ENCODE measurements at regions of chr21 and their contacts with region 1.

Region 1: GRCh38 chr21:23507501-23507900 is 2099.8 kb downstream of the MRPL39 start:
- DNase-seq: no peak
- CTCF ChIP-seq: no peak

Region 2: DNA sequence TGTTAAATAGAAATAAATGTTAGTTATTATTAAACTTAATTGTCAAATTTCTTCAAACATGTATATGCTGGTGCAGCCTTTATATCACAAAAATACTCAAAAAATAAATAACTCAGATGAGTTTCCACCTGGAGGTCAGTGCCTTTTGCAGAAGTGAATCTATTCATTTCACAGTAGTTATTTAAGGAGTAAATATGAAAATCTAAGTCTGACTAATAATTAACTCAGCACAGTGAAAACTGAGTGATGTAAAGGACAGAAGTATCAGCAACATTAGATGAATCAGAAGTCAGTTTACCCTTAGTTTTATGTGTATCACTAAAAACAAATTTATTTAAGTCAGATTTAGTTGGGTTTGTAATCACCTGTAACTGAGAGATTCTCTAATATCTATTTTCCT is 35.6 kb before region 1 on chr21:
- CTCF ChIA-PET with region 1: no interaction called
- POLR2A ChIA-PET with region 1: no interaction called
- DNase-seq: peak; percentile 22
- CTCF ChIP-seq: no peak

Region 3: GRCh38 chr21:23488245-23488644 is 19.3 kb before region 1 on chr21:
- CTCF ChIA-PET with region 1: no interaction called
- POLR2A ChIA-PET with region 1: no interaction called
- DNase-seq: no peak
- CTCF ChIP-seq: no peak

Region 4: GRCh38 chr21:23601549-23601948 is 94.0 kb after region 1 on chr21:
- CTCF ChIA-PET with region 1: no interaction called
- POLR2A ChIA-PET with region 1: interaction called, 10 read pairs
- DNase-seq: no peak
- CTCF ChIP-seq: no peak